Dorsolateral prefrontal cortex (tissue), 120 donors: ENCODE measurements at regions of chr1 and their contacts with region 1.

Region 1: DNA sequence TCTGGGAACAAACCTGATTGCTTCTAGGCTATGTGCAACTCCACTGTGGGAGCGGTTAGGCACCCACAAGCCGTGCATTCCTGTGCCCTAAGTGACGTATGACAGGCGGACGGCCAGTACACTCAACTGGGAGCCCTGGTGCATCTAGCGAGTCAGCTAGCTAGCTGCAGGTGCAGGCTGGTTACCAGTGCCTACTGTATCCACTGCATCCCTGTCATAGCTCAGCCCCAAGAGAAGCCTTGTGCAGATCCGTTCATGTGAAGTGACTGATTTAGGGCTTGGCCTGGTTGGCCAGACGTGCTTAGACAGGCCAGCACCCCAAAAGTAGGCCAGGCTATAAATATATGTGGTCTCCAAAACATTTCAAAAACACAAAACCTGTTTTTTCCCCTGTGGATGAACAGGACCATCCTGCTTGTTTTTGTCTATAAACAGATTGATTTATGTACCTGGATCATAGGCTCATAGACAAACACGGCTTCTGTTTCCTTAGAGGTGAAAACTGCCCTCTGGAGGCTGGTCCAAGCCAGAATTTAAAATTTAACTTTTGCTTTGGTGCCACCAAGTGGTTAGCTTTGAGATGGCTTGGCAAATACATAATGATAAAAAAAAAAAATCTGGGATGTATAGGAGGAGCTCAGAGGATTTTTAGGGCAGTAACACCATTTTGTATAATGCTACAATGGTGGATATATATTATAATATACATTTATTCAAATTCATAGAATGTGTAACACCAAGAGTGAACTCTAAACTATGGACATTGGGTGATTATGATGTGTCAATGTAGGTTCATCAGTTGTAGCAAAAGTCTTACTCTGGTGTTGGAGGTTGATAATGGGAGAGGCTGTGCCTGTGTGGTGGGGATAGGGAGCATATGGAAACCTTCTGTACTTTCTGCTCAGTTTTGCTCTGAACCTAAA is 68.5 kb downstream of the GIPC2 start:
- DNase-seq: peak in 6 of 10 donors; percentile 15 to 57 (median 48)
- H3K4me3 ChIP-seq: peak overlapping the region in 3 of 59 donors; percentile 10 to 23 (median 10)
- H3K27ac ChIP-seq: peak overlapping the region in 12 of 59 donors; percentile 9 to 66 (median 35)
- H3K27me3 ChIP-seq: no peaks in the 10 kb centered on the region
- CTCF ChIP-seq: peak; percentile 77 to 99 (median 94)

Region 2: DNA sequence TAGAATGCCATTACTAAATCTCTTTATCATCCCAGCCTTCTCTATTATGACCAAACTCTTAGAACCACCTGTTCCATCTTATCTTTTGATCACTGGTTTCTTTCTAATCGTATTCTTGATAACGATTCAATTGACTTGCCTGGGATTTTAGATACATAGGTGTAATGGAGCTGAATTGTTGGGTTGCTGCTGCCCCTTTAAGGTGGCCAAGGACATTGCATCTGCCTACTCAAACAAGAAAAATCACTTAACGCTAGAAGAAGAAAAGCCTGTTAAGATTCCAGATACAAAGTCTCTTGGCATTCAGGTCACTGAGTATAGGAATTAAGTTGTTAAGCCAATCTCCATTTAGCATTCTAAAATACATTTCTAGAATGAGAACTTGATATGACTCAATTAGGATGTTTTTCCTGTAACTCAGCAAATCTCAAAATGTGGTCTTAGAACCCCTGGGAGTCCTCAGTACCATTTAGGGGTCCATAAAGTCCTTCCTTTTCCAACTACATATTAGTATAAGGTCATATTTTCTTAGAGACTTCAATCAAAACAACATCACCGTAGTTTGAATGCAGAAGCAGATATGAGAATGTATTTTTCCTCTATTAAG is 213.5 kb before region 1 on chr1:
- intact Hi-C with region 1: loop called in 1 of 2 experiments (anchors 5 kb)
- DNase-seq: peak in 2 of 10 donors; percentile 38 to 53
- H3K4me3 ChIP-seq: peak overlapping the region in 1 of 59 donors; percentile 7
- H3K27ac ChIP-seq: no peak overlapping the region
- H3K27me3 ChIP-seq: no peaks in the 10 kb centered on the region
- CTCF ChIP-seq: peak; percentile 34 to 86 (median 68)

Region 3: DNA sequence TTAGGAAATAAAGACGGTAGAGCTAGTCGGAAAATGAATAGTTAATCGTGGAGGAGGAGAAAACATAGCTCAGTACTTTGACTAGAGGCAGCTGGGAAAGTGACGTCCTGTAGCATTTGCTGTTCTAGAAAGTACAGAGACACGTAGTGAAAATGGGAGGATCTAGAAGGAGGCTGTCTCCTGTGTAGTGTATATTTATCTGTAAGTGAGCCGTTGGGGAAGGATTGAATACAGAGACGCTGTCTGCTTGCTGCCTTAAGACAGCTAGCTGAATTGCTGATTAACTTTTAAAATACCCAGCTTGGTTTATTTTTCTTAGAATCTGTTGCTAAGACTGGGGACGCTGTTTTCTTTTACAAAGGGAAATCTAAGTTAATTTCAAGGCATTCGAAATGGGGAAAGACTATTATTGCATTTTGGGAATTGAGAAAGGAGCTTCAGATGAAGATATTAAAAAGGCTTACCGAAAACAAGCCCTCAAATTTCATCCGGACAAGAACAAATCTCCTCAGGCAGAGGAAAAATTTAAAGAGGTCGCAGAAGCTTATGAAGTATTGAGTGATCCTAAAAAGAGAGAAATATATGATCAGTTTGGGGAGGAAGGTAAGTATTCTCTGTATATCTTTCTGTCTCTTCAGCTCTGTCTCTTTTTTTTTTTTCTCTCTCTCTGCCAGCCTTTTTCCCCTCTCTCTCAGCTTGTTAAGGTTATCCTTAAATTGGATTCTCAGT is 109.4 kb before region 1 on chr1 and contains the start of gene DNAJB4:
- intact Hi-C with region 1: loop called (anchors 5 to 10 kb)
- DNase-seq: peak in 7 of 10 donors; percentile 47 to 87 (median 51)
- H3K4me3 ChIP-seq: peak within 1 kb of the TSS; percentile 44 to 85 (median 72)
- H3K27ac ChIP-seq: peak within 1 kb of the TSS; percentile 58 to 98 (median 94)
- H3K27me3 ChIP-seq: no peaks in the 10 kb centered on the region
- CTCF ChIP-seq: peak in 15 of 56 donors; percentile 4 to 31 (median 16)
- total RNA-seq, gene DNAJB4: 41.3 to 218 (median 75.1) TPM